CD4-positive, alpha-beta memory T cell (primary cell): ENCODE measurements at regions of chrX and their contacts with region 1.

Region 1: DNA sequence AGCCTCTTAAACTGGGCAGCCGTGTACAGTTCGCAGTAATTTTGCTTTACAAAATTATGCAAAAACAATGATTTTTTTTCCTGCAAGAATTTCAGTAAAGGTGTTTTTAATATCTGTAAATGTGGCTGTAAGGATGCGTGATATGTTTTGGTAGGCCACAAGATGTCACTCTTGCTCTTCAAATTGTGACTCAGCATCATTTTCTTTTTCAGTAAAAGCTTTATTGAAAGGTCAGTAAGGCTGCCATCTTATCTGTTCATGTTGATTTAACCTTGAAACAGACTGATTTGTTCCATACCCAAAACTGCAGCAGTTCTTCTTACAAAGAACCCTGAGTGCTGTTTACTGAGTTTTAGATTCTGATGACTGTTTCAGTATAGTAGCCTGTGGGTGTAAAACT is 39.9 kb downstream of the TXLNG start:
- DNase-seq: peak in 4 of 5 donors; percentile 17 to 38 (median 20)
- H3K4me3 ChIP-seq: no peak overlapping the region
- H3K4me3 Mint-ChIP-seq: no peak overlapping the region
- H3K27ac ChIP-seq: no peak overlapping the region
- H3K27ac Mint-ChIP-seq: no peak overlapping the region
- H3K4me1 ChIP-seq: no peaks in the 10 kb centered on the region
- H3K4me1 Mint-ChIP-seq: peaks cover 0 to 3% (median 0%) of the 10 kb centered on the region in 4 donors
- H3K27me3 ChIP-seq: no peaks in the 10 kb centered on the region
- H3K27me3 Mint-ChIP-seq: no peaks in the 10 kb centered on the region

Region 2: GRCh38 chrX:16882702-16883486 is 56.7 kb after region 1 on chrX:
- CTCF ChIA-PET with region 1: interaction called, 5 read pairs
- POLR2A ChIA-PET with region 1: no interaction called
- intact Hi-C with region 1: loop called (anchors 1 kb)
- DNase-seq: peak; percentile 55 to 70 (median 61)
- H3K4me3 ChIP-seq: peak overlapping the region in 1 of 2 donors; percentile 64
- H3K4me3 Mint-ChIP-seq: peak overlapping the region; percentile 70 to 90 (median 80)
- H3K27ac ChIP-seq: peak overlapping the region; percentile 38
- H3K27ac Mint-ChIP-seq: peak overlapping the region; percentile 22 to 78 (median 53)
- H3K4me1 ChIP-seq: peaks cover 11% of the 10 kb centered on the region
- H3K4me1 Mint-ChIP-seq: peaks cover 3 to 14% (median 9%) of the 10 kb centered on the region in 4 donors
- H3K27me3 ChIP-seq: no peaks in the 10 kb centered on the region
- H3K27me3 Mint-ChIP-seq: no peaks in the 10 kb centered on the region

Region 3: GRCh38 chrX:16892504-16893362 is 66.5 kb after region 1 on chrX:
- CTCF ChIA-PET with region 1: interaction called, 5 read pairs
- POLR2A ChIA-PET with region 1: no interaction called
- intact Hi-C with region 1: loop called (anchors 1 kb)
- DNase-seq: peak; percentile 49 to 64 (median 57)
- H3K4me3 ChIP-seq: no peak overlapping the region
- H3K4me3 Mint-ChIP-seq: no peak overlapping the region
- H3K27ac ChIP-seq: no peak overlapping the region
- H3K27ac Mint-ChIP-seq: no peak overlapping the region
- H3K4me1 ChIP-seq: peaks cover 12% of the 10 kb centered on the region
- H3K4me1 Mint-ChIP-seq: peaks cover 13 to 16% (median 14%) of the 10 kb centered on the region in 4 donors
- H3K27me3 ChIP-seq: no peaks in the 10 kb centered on the region
- H3K27me3 Mint-ChIP-seq: peaks cover 0 to 2% of the 10 kb centered on the region in 2 donors

Region 4: DNA sequence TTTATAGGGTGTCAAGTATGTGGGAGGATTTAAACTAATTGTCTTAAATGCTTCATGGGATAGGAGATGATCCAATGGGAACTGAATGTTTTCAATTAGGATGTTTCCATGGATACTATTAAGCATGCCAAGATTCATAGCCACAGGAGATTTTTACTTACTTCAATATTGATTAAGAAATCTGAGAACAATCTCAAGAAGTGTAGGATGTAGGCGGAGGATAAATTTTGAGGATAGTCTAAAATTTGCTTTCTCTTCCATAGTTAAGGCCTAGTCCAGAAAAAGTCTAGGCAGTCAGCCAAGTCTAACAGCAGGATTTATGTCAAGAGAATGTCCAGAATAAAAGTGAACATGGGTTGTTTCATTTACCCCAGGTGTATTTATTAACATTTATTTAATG is 153.0 kb after region 1 on chrX:
- CTCF ChIA-PET with region 1: no interaction called
- POLR2A ChIA-PET with region 1: no interaction called
- intact Hi-C with region 1: no loop called
- DNase-seq: no peak
- H3K4me3 ChIP-seq: no peak overlapping the region
- H3K4me3 Mint-ChIP-seq: no peak overlapping the region
- H3K27ac ChIP-seq: no peak overlapping the region
- H3K27ac Mint-ChIP-seq: no peak overlapping the region
- H3K4me1 ChIP-seq: no peaks in the 10 kb centered on the region
- H3K4me1 Mint-ChIP-seq: peaks cover 0 to 5% (median 1%) of the 10 kb centered on the region in 4 donors
- H3K27me3 ChIP-seq: no peaks in the 10 kb centered on the region
- H3K27me3 Mint-ChIP-seq: peaks cover 0 to 3% of the 10 kb centered on the region in 2 donors

Region 5: GRCh38 chrX:17046478-17047097 is 220.4 kb after region 1 on chrX:
- CTCF ChIA-PET with region 1: interaction called, 22 read pairs
- POLR2A ChIA-PET with region 1: no interaction called
- intact Hi-C with region 1: no loop called
- DNase-seq: peak in 4 of 5 donors; percentile 11 to 25 (median 23)
- H3K4me3 ChIP-seq: no peak overlapping the region
- H3K4me3 Mint-ChIP-seq: no peak overlapping the region
- H3K27ac ChIP-seq: no peak overlapping the region
- H3K27ac Mint-ChIP-seq: no peak overlapping the region
- H3K4me1 ChIP-seq: no peaks in the 10 kb centered on the region
- H3K4me1 Mint-ChIP-seq: no peaks in the 10 kb centered on the region
- H3K27me3 ChIP-seq: no peaks in the 10 kb centered on the region
- H3K27me3 Mint-ChIP-seq: no peaks in the 10 kb centered on the region

Region 6: DNA sequence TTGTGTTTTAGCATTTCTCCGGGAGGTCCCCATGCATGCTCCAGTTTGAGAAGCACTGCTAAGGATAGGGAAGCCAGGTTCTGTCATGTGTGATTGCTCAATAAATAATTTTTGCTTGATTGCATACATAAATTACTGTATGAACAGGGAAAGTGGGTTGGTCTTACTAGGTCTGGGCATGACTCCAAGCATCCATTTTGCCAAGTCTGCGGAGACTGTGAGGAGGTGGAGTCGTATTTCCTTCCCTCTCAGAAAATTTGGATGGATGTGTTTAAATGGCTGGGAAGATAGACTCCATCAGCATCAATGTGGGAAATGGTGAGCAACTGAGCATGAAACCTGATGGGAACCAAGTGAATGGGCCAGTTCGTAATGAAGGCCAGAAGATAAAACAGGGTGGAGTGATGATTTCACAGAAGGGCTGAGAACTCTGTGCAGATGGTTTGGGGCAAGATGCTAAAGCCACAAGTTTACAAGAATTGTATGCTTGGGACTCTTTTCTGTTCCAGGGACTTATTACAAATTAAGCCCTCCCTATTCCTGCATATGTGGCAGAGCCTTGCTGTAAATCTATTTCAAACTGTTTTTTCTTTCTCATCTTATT is 632.9 kb after region 1 on chrX:
- CTCF ChIA-PET with region 1: no interaction called
- POLR2A ChIA-PET with region 1: no interaction called
- intact Hi-C with region 1: no loop called
- DNase-seq: no peak
- H3K4me3 ChIP-seq: no peak overlapping the region
- H3K4me3 Mint-ChIP-seq: no peak overlapping the region
- H3K27ac ChIP-seq: no peak overlapping the region
- H3K27ac Mint-ChIP-seq: no peak overlapping the region
- H3K4me1 ChIP-seq: no peaks in the 10 kb centered on the region
- H3K4me1 Mint-ChIP-seq: no peaks in the 10 kb centered on the region
- H3K27me3 ChIP-seq: no peaks in the 10 kb centered on the region
- H3K27me3 Mint-ChIP-seq: peaks cover 0 to 1% of the 10 kb centered on the region in 2 donors